Naive thymus-derived CD4-positive, alpha-beta T cell (primary cell): ENCODE measurements at regions of chr15 and their contacts with region 1.

Region 1: DNA sequence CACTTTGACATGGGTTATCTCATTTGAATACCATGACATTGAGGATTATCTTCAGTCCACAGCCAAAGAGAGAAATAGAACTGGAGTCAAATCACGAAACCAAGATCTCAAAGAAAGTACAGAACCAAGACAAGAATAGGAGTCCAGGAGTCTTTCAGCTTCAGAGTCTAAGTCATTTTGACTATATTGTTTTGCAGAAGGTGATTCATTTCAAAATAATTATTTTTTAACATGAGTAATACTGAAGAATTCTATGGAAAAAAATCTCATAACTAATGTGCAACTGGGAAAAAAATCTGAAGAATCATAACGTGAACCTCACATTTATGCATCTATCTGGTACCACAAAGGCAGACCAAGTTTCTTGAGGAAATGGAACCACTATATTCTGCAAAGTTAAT is 60.3 kb downstream of the UBE3A start:
- DNase-seq: no peak
- ATAC-seq: no peak
- H3K4me3 ChIP-seq: no peak overlapping the region
- H3K4me3 Mint-ChIP-seq: no peak overlapping the region
- H3K27ac ChIP-seq: no peak overlapping the region
- H3K27ac Mint-ChIP-seq: peak overlapping the region in 1 of 9 donors; percentile 45
- H3K4me1 ChIP-seq: no peaks in the 10 kb centered on the region
- H3K4me1 Mint-ChIP-seq: peaks cover 4 to 43% (median 29%) of the 10 kb centered on the region in 7 donors
- H3K27me3 ChIP-seq: no peaks in the 10 kb centered on the region
- H3K27me3 Mint-ChIP-seq: no peaks in the 10 kb centered on the region

Region 2: DNA sequence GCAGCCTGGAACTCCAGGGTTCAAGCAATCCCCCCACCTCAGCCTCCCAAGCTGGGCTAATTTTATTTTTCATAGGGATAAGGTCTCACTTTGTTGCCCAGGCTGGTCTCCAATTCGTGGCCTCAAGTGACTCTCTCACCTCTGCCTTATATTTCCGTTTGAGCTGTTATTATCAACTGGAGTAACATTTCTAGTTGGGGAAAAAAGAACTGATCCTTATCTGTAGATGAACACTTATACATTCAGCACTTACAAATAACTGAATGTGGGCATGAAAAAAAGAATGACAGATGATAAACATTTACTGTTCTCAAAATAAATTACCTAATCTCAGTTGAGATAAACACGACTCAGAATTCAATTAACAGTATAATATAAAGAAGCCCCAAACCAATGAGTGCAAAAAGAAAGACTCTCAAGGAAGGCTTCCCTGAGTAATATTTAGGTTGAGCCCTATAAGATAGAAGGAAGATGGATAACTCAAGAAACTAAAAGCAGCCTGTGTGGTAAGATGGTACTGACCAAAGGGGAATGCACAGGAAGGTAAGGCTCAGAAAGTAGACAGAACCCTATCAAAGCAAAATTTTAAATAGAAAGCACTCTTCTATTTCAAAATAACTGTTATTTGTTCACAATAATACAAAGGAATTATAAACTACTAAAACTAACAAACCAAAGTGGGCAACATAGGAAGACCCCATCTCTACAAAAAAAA is 48.6 kb after region 1 on chr15:
- CTCF ChIA-PET with region 1: no interaction called
- POLR2A ChIA-PET with region 1: no interaction called
- intact Hi-C with region 1: loop called in 1 of 2 experiments (anchors 5 kb)
- DNase-seq: no peak
- ATAC-seq: no peak
- H3K4me3 ChIP-seq: no peak overlapping the region
- H3K4me3 Mint-ChIP-seq: peak overlapping the region in 8 of 10 donors; percentile 5 to 51 (median 26)
- H3K27ac ChIP-seq: no peak overlapping the region
- H3K27ac Mint-ChIP-seq: peak overlapping the region in 3 of 9 donors; percentile 14 to 32 (median 19)
- H3K4me1 ChIP-seq: peaks cover 17 to 37% of the 10 kb centered on the region in 2 donors
- H3K4me1 Mint-ChIP-seq: peaks cover 23 to 93% (median 78%) of the 10 kb centered on the region in 7 donors
- H3K27me3 ChIP-seq: no peaks in the 10 kb centered on the region
- H3K27me3 Mint-ChIP-seq: no peaks in the 10 kb centered on the region